CD4-positive, alpha-beta memory T cell (primary cell): ENCODE measurements at regions of chr2 and their contacts with region 1.

Region 1: DNA sequence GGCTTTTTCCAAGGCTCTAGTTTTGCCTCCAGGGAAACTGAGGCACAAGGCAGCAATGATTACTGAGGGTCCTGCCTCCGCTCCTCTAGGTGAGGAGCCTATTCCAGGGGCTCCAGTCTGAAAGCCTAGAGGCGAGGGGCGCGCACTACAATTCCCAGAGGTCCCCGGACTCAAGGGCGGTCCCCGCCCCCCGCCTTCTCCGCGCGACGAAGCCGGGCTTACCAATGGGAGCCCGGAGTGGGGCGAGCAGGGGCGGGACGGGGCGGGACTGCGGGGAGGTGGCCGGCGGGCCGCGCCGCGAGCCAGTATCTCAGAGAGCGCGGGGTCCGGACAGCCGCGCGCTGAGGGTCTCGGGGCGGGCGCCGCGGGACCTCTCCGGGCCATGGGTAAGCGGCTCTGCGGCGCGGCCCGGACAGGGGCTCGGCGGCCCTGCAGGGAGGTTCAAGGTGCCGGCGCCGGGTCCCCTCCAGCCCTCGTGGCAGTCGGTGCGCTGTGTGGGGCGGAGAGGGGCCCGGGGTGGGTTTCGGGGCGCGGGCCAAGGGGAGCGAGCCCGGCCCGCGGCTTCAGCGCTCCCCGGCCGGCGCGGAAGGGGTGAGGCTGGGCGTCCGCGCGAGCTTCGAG is at the start of gene ARID5A:
- DNase-seq: peak; percentile 85 to 93 (median 87)
- H3K4me3 ChIP-seq: peak within 1 kb of the TSS; percentile 81 to 97
- H3K4me3 Mint-ChIP-seq: peak within 1 kb of the TSS; percentile 91 to 98 (median 96)
- H3K27ac ChIP-seq: peak within 1 kb of the TSS; percentile 94
- H3K27ac Mint-ChIP-seq: peak within 1 kb of the TSS; percentile 96 to 100 (median 99)
- H3K4me1 ChIP-seq: peaks cover 52% of the 10 kb centered on the region
- H3K4me1 Mint-ChIP-seq: peaks cover 26 to 65% (median 41%) of the 10 kb centered on the region in 4 donors
- H3K27me3 ChIP-seq: no peaks in the 10 kb centered on the region
- H3K27me3 Mint-ChIP-seq: no peaks in the 10 kb centered on the region
- total RNA-seq, gene ARID5A: 80.0 to 83.8 TPM

Region 2: DNA sequence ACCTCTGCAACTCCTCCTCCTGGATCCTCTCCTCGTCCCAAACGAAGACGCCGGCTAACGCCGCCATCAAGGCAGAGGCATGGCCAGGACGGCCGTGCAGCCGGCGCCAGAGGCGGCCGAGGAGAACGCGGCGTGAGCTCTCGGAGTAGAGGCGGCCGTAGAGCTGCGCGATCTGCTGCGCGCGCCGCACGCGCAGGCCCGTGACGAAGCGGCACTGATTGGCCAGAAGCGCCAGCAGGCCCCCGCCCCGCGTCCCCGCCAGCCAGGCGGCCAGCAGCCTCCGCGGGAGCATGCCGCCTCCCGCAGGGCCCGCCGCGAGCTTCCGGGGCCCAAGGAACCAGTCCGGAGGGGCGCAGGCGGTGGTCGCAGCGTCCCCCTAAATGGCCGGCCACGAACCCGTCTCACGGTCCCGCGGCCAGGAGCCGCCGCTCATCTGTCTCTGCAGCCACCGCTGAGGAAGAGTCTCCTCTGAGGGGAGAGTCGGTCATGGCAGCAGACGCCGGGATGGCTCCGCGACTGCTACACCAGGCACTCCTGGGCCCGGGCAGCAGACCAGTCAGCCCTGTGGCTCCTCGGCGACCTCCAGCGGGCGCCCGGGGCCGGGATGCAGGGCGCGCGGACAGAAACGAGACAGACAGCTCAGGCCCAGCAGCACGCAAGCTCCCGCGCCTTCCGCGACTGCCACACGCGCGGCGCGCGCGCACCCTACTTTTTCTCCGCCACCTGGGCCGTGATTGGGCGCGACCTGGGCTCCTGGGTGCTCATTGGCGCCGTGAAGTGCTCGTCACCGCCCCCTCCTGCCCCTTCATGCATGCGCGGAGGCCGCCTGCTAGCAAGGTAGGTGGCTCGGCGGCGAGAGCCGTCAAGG is 328.2 kb before region 1 on chr2 and contains the start of gene STARD7:
- CTCF ChIA-PET with region 1: no interaction called
- POLR2A ChIA-PET with region 1: interaction called, 17 read pairs
- intact Hi-C with region 1: no loop called
- DNase-seq: peak; percentile 94 to 96 (median 95)
- H3K4me3 ChIP-seq: peak within 1 kb of the TSS; percentile 45 to 62
- H3K4me3 Mint-ChIP-seq: peak within 1 kb of the TSS; percentile 88 to 98 (median 94)
- H3K27ac ChIP-seq: peak within 1 kb of the TSS; percentile 81
- H3K27ac Mint-ChIP-seq: peak within 1 kb of the TSS; percentile 92 to 96 (median 95)
- H3K4me1 ChIP-seq: peaks cover 53% of the 10 kb centered on the region
- H3K4me1 Mint-ChIP-seq: peaks cover 31 to 57% (median 51%) of the 10 kb centered on the region in 4 donors
- H3K27me3 ChIP-seq: no peaks in the 10 kb centered on the region
- H3K27me3 Mint-ChIP-seq: no peaks in the 10 kb centered on the region
- total RNA-seq, gene STARD7: 84.9 to 92.9 TPM

Region 3: GRCh38 chr2:96336104-96336775 is 200.3 kb before region 1 on chr2:
- CTCF ChIA-PET with region 1: no interaction called
- POLR2A ChIA-PET with region 1: interaction called, 29 read pairs
- intact Hi-C with region 1: no loop called
- DNase-seq: no peak
- H3K4me3 ChIP-seq: peak overlapping the region; percentile 42 to 75
- H3K4me3 Mint-ChIP-seq: peak overlapping the region; percentile 66 to 89 (median 80)
- H3K27ac ChIP-seq: peak overlapping the region; percentile 86
- H3K27ac Mint-ChIP-seq: peak overlapping the region; percentile 60 to 94 (median 84)
- H3K4me1 ChIP-seq: peaks cover 35% of the 10 kb centered on the region
- H3K4me1 Mint-ChIP-seq: peaks cover 22 to 48% (median 31%) of the 10 kb centered on the region in 4 donors
- H3K27me3 ChIP-seq: no peaks in the 10 kb centered on the region
- H3K27me3 Mint-ChIP-seq: no peaks in the 10 kb centered on the region

Region 4: GRCh38 chr2:96427917-96428316 is 108.6 kb before region 1 on chr2:
- CTCF ChIA-PET with region 1: no interaction called
- POLR2A ChIA-PET with region 1: no interaction called
- intact Hi-C with region 1: no loop called
- DNase-seq: no peak
- H3K4me3 ChIP-seq: no peak overlapping the region
- H3K4me3 Mint-ChIP-seq: no peak overlapping the region
- H3K27ac ChIP-seq: no peak overlapping the region
- H3K27ac Mint-ChIP-seq: no peak overlapping the region
- H3K4me1 ChIP-seq: no peaks in the 10 kb centered on the region
- H3K4me1 Mint-ChIP-seq: no peaks in the 10 kb centered on the region
- H3K27me3 ChIP-seq: no peaks in the 10 kb centered on the region
- H3K27me3 Mint-ChIP-seq: peaks cover 18 to 26% of the 10 kb centered on the region in 2 donors

Region 5: GRCh38 chr2:96438589-96438988 is 98.0 kb before region 1 on chr2:
- CTCF ChIA-PET with region 1: no interaction called
- POLR2A ChIA-PET with region 1: no interaction called
- intact Hi-C with region 1: no loop called
- DNase-seq: no peak
- H3K4me3 ChIP-seq: no peak overlapping the region
- H3K4me3 Mint-ChIP-seq: no peak overlapping the region
- H3K27ac ChIP-seq: no peak overlapping the region
- H3K27ac Mint-ChIP-seq: no peak overlapping the region
- H3K4me1 ChIP-seq: no peaks in the 10 kb centered on the region
- H3K4me1 Mint-ChIP-seq: no peaks in the 10 kb centered on the region
- H3K27me3 ChIP-seq: no peaks in the 10 kb centered on the region
- H3K27me3 Mint-ChIP-seq: peaks cover 0 to 5% of the 10 kb centered on the region in 2 donors

Region 6: GRCh38 chr2:96485751-96486651 is 50.6 kb before region 1 on chr2:
- CTCF ChIA-PET with region 1: no interaction called
- POLR2A ChIA-PET with region 1: interaction called, 15 read pairs
- intact Hi-C with region 1: loop called (anchors 5 kb)
- DNase-seq: peak; percentile 69 to 88 (median 78)
- H3K4me3 ChIP-seq: peak overlapping the region; percentile 38 to 58
- H3K4me3 Mint-ChIP-seq: peak overlapping the region; percentile 86 to 98 (median 92)
- H3K27ac ChIP-seq: peak overlapping the region; percentile 63
- H3K27ac Mint-ChIP-seq: peak overlapping the region; percentile 92 to 98 (median 97)
- H3K4me1 ChIP-seq: peaks cover 18% of the 10 kb centered on the region
- H3K4me1 Mint-ChIP-seq: peaks cover 18 to 42% (median 24%) of the 10 kb centered on the region in 4 donors
- H3K27me3 ChIP-seq: no peaks in the 10 kb centered on the region
- H3K27me3 Mint-ChIP-seq: peaks cover 0 to 1% of the 10 kb centered on the region in 2 donors

Region 7: GRCh38 chr2:96594691-96595152 is 58.2 kb after region 1 on chr2:
- CTCF ChIA-PET with region 1: no interaction called
- POLR2A ChIA-PET with region 1: interaction called, 10 read pairs
- intact Hi-C with region 1: no loop called
- DNase-seq: peak in 4 of 5 donors; percentile 42 to 55 (median 50)
- H3K4me3 ChIP-seq: no peak overlapping the region
- H3K4me3 Mint-ChIP-seq: peak overlapping the region in 7 of 8 donors; percentile 35 to 79 (median 62)
- H3K27ac ChIP-seq: peak overlapping the region; percentile 10
- H3K27ac Mint-ChIP-seq: peak overlapping the region; percentile 78 to 93 (median 88)
- H3K4me1 ChIP-seq: peaks cover 40% of the 10 kb centered on the region
- H3K4me1 Mint-ChIP-seq: peaks cover 35 to 46% (median 39%) of the 10 kb centered on the region in 4 donors
- H3K27me3 ChIP-seq: no peaks in the 10 kb centered on the region
- H3K27me3 Mint-ChIP-seq: no peaks in the 10 kb centered on the region

Region 8: GRCh38 chr2:96816128-96816835 is 279.7 kb after region 1 on chr2 and contains the start of gene CNNM3:
- CTCF ChIA-PET with region 1: no interaction called
- POLR2A ChIA-PET with region 1: interaction called, 16 read pairs
- intact Hi-C with region 1: no loop called
- DNase-seq: peak; percentile 93 to 97 (median 94)
- H3K4me3 ChIP-seq: peak within 1 kb of the TSS; percentile 82 to 83
- H3K4me3 Mint-ChIP-seq: peak within 1 kb of the TSS; percentile 93 to 97 (median 95)
- H3K27ac ChIP-seq: peak within 1 kb of the TSS; percentile 77
- H3K27ac Mint-ChIP-seq: peak within 1 kb of the TSS; percentile 74 to 96 (median 93)
- H3K4me1 ChIP-seq: peaks cover 57% of the 10 kb centered on the region
- H3K4me1 Mint-ChIP-seq: peaks cover 50 to 76% (median 61%) of the 10 kb centered on the region in 4 donors
- H3K27me3 ChIP-seq: no peaks in the 10 kb centered on the region
- H3K27me3 Mint-ChIP-seq: no peaks in the 10 kb centered on the region
- total RNA-seq, gene CNNM3: 55.1 to 57.4 TPM

Region 9: GRCh38 chr2:96960153-96960961 is 423.8 kb after region 1 on chr2:
- CTCF ChIA-PET with region 1: no interaction called
- POLR2A ChIA-PET with region 1: interaction called, 10 read pairs
- intact Hi-C with region 1: loop called (anchors 5 kb)
- DNase-seq: peak; percentile 75 to 77 (median 76)
- H3K4me3 ChIP-seq: no peak overlapping the region
- H3K4me3 Mint-ChIP-seq: peak overlapping the region; percentile 49 to 78 (median 74)
- H3K27ac ChIP-seq: peak overlapping the region; percentile 58
- H3K27ac Mint-ChIP-seq: peak overlapping the region; percentile 91 to 99 (median 97)
- H3K4me1 ChIP-seq: peaks cover 58% of the 10 kb centered on the region
- H3K4me1 Mint-ChIP-seq: peaks cover 39 to 61% (median 50%) of the 10 kb centered on the region in 4 donors
- H3K27me3 ChIP-seq: no peaks in the 10 kb centered on the region
- H3K27me3 Mint-ChIP-seq: no peaks in the 10 kb centered on the region